Ascending aorta (tissue), 2 donors: ENCODE measurements at regions of chr17 and their contacts with region 1.

Region 1: GRCh38 chr17:4980644-4981216 is 6.7 kb downstream of the CAMTA2 start:
- DNase-seq: no peak
- H3K4me3 ChIP-seq: no peak overlapping the region
- H3K27ac ChIP-seq: no peak overlapping the region
- H3K4me1 ChIP-seq: no peaks in the 10 kb centered on the region
- H3K27me3 ChIP-seq: no peaks in the 10 kb centered on the region
- CTCF ChIP-seq: peak; percentile 68 to 76 (median 76)

Region 2: DNA sequence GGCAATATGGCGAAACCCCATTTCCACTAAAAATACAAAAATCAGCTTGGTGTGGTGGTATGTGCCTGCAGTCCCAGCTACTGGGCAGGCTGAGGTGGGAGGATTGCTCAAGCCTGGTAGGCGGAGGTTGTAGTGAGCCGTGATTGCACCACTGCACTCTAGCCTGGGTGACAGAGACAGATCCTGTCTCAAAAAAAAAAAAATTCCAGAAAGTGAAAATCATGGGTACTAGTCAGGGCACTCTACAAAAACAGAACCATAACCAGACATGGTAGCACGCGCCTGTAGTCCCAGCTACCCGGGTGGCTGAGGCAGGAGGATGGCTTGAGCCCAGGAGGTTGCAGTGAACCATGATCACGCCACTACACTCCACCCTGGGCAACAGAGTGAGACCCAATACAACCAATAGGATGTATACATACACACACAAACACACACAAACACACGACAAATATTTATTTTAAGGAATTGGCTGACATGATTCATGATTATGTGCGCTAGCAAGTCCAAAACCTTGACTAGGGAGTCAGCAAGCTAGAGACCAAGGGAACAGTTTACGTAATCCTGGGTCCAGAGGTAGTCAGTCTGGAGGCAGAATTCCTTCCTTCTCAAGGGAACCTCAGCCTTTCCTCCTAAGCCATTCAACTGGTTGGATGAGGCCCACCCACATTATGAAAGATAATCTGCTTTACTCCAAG is 60.2 kb before region 1 on chr17:
- intact Hi-C with region 1: loop called (anchors 2 kb)
- DNase-seq: no peak
- H3K4me3 ChIP-seq: no peak overlapping the region
- H3K27ac ChIP-seq: no peak overlapping the region
- H3K4me1 ChIP-seq: no peaks in the 10 kb centered on the region
- H3K27me3 ChIP-seq: no peaks in the 10 kb centered on the region
- CTCF ChIP-seq: no peak

Region 3: GRCh38 chr17:5035315-5035714 is 54.6 kb after region 1 on chr17 and contains the start of gene SLC52A1:
- intact Hi-C with region 1: no loop called
- DNase-seq: no peak
- H3K4me3 ChIP-seq: peak within 1 kb of the TSS in 1 of 2 donors; percentile 16
- H3K27ac ChIP-seq: no peak within 1 kb of the TSS
- H3K4me1 ChIP-seq: peaks cover 0 to 4% of the 10 kb centered on the region in 2 donors
- H3K27me3 ChIP-seq: no peaks in the 10 kb centered on the region
- CTCF ChIP-seq: no peak
- total RNA-seq, gene SLC52A1: not detected